OCI-LY7 (cell line): ENCODE measurements at regions of chr3 and their contacts with region 1.

Region 1: DNA sequence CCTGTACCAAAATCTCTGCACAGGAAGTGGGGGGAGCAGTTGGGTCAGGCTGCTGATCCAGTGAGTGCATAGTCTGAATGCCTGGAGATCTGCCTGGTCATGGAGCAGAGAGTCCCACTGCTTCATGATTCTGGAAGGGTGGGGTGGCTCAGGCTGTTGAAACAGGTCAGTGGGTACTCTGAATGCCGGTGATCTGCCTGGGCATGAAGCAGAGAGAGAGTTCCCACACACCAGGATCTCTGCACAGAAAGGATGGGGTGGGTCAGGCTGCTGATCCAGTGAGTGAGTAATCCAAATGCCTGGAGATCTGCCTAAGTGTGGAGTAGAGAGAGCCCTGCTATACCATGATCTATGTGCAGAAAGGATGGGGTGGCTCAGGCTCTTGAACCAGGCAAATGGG is 16.1 kb upstream of the GCSAM start:
- DNase-seq: no peak
- H3K4me3 ChIP-seq: no peak overlapping the region
- H3K27ac ChIP-seq: no peak overlapping the region
- H3K4me1 ChIP-seq: no peaks in the 10 kb centered on the region
- CTCF ChIP-seq: no peak

Region 2: DNA sequence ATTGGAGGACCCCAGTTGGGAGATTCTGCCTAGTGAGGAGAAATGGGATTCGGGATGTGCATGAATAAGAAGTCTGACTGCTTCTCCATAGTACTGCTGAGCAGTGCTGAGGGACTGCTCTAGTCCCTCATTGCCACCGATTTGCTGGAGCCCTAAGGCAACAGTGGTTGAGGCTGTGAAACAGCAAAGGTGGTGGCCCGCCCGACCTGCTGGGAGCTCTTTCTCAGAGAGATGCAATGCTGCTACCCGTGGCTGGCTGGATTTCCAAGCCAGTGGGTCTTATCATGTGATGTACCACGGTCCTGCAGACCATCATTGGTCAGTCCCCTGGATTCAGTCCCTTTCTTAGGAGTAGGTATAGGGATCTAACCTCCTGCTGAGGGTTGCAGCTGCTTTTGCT is 26.5 kb after region 1 on chr3:
- CTCF ChIA-PET with region 1: no interaction called
- POLR2A ChIA-PET with region 1: interaction called, 10 read pairs
- intact Hi-C with region 1: no loop called
- DNase-seq: no peak
- H3K4me3 ChIP-seq: no peak overlapping the region
- H3K27ac ChIP-seq: no peak overlapping the region
- H3K4me1 ChIP-seq: no peaks in the 10 kb centered on the region
- CTCF ChIP-seq: no peak

Region 3: DNA sequence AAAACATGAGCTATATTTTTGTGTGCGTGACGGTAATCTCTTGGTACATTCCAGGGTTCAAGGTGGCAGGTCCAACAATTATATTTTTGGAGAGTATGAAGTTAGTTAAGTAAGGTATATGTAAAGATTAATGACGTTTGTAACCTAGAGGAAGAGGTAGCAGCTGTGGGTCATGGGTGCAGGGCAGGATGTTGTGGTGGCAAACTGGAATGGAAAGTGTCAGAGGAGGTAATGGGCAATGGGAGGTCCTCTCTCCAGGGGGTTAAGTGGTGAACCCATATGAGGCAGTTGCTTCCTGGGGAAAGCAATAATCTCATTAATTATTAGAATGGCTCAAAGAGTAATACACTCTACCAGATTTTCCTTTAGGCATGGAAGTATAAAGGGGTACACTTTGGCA is 698.6 kb after region 1 on chr3:
- CTCF ChIA-PET with region 1: no interaction called
- POLR2A ChIA-PET with region 1: no interaction called
- intact Hi-C with region 1: no loop called
- DNase-seq: peak; percentile 43
- H3K4me3 ChIP-seq: peak overlapping the region; percentile 38
- H3K27ac ChIP-seq: no peak overlapping the region
- H3K4me1 ChIP-seq: peaks cover 12% of the 10 kb centered on the region
- CTCF ChIP-seq: no peak